ENCODE measurements at regions of chr4 and their contacts with region 1.

Region 1: GRCh38 chr4:40309250-40309774 is 25.8 kb upstream of the CHRNA9 start:
- DNase-seq: peak; percentile 85 to 94 (median 92)
- H3K4me3 ChIP-seq: no peak overlapping the region
- H3K27ac ChIP-seq: no peak overlapping the region
- H3K4me1 ChIP-seq: no peaks in the 10 kb centered on the region
- H3K27me3 ChIP-seq: no peaks in the 10 kb centered on the region
- CTCF ChIP-seq: peak; percentile 63 to 84 (median 77)
- EP300 ChIP-seq: no peak
- POLR2A ChIP-seq: no peak

Region 2: DNA sequence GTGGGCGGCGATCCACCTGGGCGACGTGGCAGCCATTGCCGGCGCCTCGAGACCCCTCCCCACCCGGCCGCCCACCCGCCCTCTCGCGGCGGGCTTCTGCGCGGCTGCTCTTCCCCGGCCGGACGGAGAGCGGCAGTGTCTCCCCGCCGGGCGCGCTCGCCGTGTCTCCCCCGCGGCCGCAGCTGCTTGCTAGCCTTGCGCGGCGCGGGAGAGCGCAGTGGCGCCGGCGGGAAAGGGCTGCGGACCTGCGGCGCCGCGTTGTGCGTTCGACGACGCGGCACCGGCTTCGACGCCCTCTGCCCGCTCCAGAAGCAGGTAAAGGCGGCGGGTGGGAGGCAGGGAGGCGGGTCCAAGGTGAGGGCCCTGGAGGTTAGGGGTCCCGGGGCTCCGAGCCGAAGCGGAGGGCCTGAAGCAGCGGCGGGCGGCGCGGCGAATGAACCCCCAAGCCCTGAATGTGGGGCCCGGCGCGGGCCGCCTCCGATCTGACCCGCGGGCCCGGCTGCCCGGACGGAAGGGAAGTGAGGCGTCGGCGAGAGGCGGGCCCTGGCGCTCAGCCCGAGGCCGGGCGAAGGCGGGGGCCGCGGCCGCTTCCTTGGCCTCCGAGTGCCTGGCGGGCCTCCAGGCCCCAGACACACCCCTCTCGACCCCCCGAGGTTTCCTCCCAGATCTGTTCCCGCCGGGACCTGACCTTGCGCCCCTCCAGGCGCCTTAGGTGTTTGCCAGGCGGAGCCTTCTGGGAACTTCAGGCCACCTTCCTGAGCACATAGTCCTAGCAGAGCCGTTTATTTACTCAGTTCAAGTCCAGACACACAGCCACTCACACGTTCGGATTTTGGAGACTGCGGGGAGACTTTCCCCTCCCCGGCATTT is 252.4 kb before region 1 on chr4 and contains the start of gene N4BP2:
- intact Hi-C with region 1: loop called in 3 of 4 experiments (anchors 5 to 10 kb)
- DNase-seq: peak; percentile 85 to 94 (median 88)
- H3K4me3 ChIP-seq: peak within 1 kb of the TSS; percentile 100
- H3K27ac ChIP-seq: peak within 1 kb of the TSS; percentile 97 to 98
- H3K4me1 ChIP-seq: peaks cover 3% of the 10 kb centered on the region
- H3K27me3 ChIP-seq: no peaks in the 10 kb centered on the region
- CTCF ChIP-seq: peak; percentile 56 to 83 (median 76)
- EP300 ChIP-seq: no peak
- POLR2A ChIP-seq: peak; percentile 80
- total RNA-seq, gene N4BP2: 9.7 to 21.3 (median 11.9) TPM

Region 3: GRCh38 chr4:40149960-40150385 is 159.3 kb before region 1 on chr4:
- intact Hi-C with region 1: loop called in 2 of 4 experiments (anchors 5 to 10 kb)
- DNase-seq: peak in 3 of 5 donors; percentile 24 to 63 (median 37)
- H3K4me3 ChIP-seq: no peak overlapping the region
- H3K27ac ChIP-seq: no peak overlapping the region
- H3K4me1 ChIP-seq: no peaks in the 10 kb centered on the region
- H3K27me3 ChIP-seq: no peaks in the 10 kb centered on the region
- CTCF ChIP-seq: peak; percentile 46 to 64 (median 62)
- EP300 ChIP-seq: no peak
- POLR2A ChIP-seq: no peak

Region 4: DNA sequence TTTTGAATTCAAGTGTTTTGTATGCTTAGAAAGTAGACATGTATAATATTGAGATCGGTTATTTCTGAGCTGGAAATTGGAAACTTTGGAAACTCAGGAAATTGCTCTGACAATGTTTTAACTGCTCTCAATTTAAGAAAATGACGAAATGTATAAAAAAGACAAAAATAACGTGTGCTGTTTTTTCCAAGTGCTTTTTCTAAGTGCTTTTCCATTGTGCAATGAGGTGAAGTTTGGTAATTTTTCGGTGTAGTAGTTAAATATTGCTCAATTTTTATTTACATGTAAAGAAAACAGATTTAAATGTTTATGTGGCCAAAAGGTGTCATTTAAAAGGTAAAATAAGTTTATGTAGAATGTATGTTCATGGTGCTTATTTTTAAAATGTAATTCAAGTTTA is 151.9 kb before region 1 on chr4:
- intact Hi-C with region 1: loop called in 2 of 4 experiments (anchors 5 to 10 kb)
- DNase-seq: no peak
- H3K4me3 ChIP-seq: no peak overlapping the region
- H3K27ac ChIP-seq: no peak overlapping the region
- H3K4me1 ChIP-seq: no peaks in the 10 kb centered on the region
- H3K27me3 ChIP-seq: no peaks in the 10 kb centered on the region
- CTCF ChIP-seq: no peak
- EP300 ChIP-seq: no peak
- POLR2A ChIP-seq: no peak